ENCODE measurements at regions of chr5 and their contacts with region 1.

Region 1: GRCh38 chr5:37496902-37497445 is 117.9 kb downstream of the WDR70 start:
- DNase-seq: no peak
- ATAC-seq: no peak
- H3K4me3 ChIP-seq: no peak overlapping the region
- H3K4me3 Mint-ChIP-seq: no peak overlapping the region
- H3K27ac ChIP-seq: no peak overlapping the region
- H3K27ac Mint-ChIP-seq: no peak overlapping the region
- H3K4me1 ChIP-seq: no peaks in the 10 kb centered on the region
- H3K4me1 Mint-ChIP-seq: peaks cover 7 to 22% (median 19%) of the 10 kb centered on the region in 3 donors
- H3K27me3 ChIP-seq: no peaks in the 10 kb centered on the region
- H3K27me3 Mint-ChIP-seq: no peaks in the 10 kb centered on the region

Region 2: GRCh38 chr5:37565067-37565670 is 68.2 kb after region 1 on chr5:
- CTCF ChIA-PET with region 1: no interaction called
- POLR2A ChIA-PET with region 1: no interaction called
- DNase-seq: no peak
- ATAC-seq: no peak
- H3K4me3 ChIP-seq: no peak overlapping the region
- H3K4me3 Mint-ChIP-seq: no peak overlapping the region
- H3K27ac ChIP-seq: no peak overlapping the region
- H3K27ac Mint-ChIP-seq: no peak overlapping the region
- H3K4me1 ChIP-seq: no peaks in the 10 kb centered on the region
- H3K4me1 Mint-ChIP-seq: peaks cover 0 to 9% (median 3%) of the 10 kb centered on the region in 3 donors
- H3K27me3 ChIP-seq: no peaks in the 10 kb centered on the region
- H3K27me3 Mint-ChIP-seq: no peaks in the 10 kb centered on the region

Region 3: GRCh38 chr5:37615184-37615583 is 118.2 kb after region 1 on chr5:
- CTCF ChIA-PET with region 1: no interaction called
- POLR2A ChIA-PET with region 1: no interaction called
- DNase-seq: no peak
- ATAC-seq: no peak
- H3K4me3 ChIP-seq: no peak overlapping the region
- H3K4me3 Mint-ChIP-seq: no peak overlapping the region
- H3K27ac ChIP-seq: no peak overlapping the region
- H3K27ac Mint-ChIP-seq: no peak overlapping the region
- H3K4me1 ChIP-seq: no peaks in the 10 kb centered on the region
- H3K4me1 Mint-ChIP-seq: no peaks in the 10 kb centered on the region
- H3K27me3 ChIP-seq: no peaks in the 10 kb centered on the region
- H3K27me3 Mint-ChIP-seq: no peaks in the 10 kb centered on the region

Region 4: DNA sequence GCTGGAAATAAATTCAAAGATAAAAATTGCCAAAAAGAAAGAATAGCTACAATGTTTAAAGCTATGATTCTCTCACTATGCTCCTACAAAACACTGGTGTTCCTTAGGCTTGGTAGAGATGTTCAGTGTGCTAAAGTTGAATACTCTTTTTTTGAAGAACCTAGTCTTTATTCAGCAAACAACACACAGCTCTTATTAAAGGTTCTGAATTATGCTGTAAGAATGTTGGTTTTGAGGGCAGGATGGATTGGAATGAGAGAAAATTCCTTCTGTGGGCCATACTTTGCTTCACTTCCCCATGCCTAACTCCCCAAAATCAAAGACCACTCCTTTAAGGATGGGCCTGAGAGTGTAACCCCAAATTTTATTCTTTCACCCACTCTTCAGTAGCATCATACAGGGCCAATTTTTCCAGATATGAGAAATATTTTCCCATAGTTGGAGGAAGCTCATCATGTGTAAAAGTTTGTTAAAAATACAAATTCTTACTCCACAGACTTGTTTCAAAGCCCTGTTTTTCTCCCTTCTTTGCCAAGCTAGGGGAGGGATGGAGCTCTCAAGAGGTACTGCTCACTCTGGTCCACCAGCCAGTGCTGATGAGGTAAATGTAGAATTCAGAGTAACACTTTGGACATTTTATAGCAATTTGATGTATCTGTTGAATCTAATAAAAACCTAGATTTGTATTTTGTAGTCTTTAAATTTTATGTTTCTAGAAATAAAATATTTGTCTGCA is 243.5 kb after region 1 on chr5:
- CTCF ChIA-PET with region 1: no interaction called
- POLR2A ChIA-PET with region 1: interaction called in 1 of 2 experiments, 10 read pairs
- DNase-seq: no peak
- ATAC-seq: no peak
- H3K4me3 ChIP-seq: no peak overlapping the region
- H3K4me3 Mint-ChIP-seq: no peak overlapping the region
- H3K27ac ChIP-seq: no peak overlapping the region
- H3K27ac Mint-ChIP-seq: no peak overlapping the region
- H3K4me1 ChIP-seq: peaks cover 0 to 3% of the 10 kb centered on the region in 2 experiments
- H3K4me1 Mint-ChIP-seq: peaks cover 0 to 20% (median 15%) of the 10 kb centered on the region in 3 donors
- H3K27me3 ChIP-seq: no peaks in the 10 kb centered on the region
- H3K27me3 Mint-ChIP-seq: no peaks in the 10 kb centered on the region

Measured in T-cell (primary cell).